Caco-2 (cell line): ENCODE measurements at regions of chr1 and their contacts with region 1.

Region 1: GRCh38 chr1:5620990-5621389 is 371.2 kb downstream of the NPHP4 start:
- DNase-seq: peak in 1 of 2 experiments; percentile 56
- H3K4me3 ChIP-seq: no peak overlapping the region
- H3K4me3 Mint-ChIP-seq: no peak overlapping the region
- H3K27ac Mint-ChIP-seq: no peak overlapping the region
- H3K4me1 ChIP-seq: no peaks in the 10 kb centered on the region
- H3K4me1 Mint-ChIP-seq: no peaks in the 10 kb centered on the region
- H3K27me3 ChIP-seq: no peaks in the 10 kb centered on the region
- H3K27me3 Mint-ChIP-seq: peaks cover 19% of the 10 kb centered on the region
- CTCF ChIP-seq: peak; percentile 57 to 72

Region 2: GRCh38 chr1:5514519-5515183 is 106.3 kb before region 1 on chr1:
- CTCF ChIA-PET with region 1: interaction called, 3 read pairs
- POLR2A ChIA-PET with region 1: no interaction called
- intact Hi-C with region 1: loop called (anchors 1 kb)
- DNase-seq: peak in 1 of 2 experiments; percentile 79
- H3K4me3 ChIP-seq: no peak overlapping the region
- H3K4me3 Mint-ChIP-seq: no peak overlapping the region
- H3K27ac Mint-ChIP-seq: no peak overlapping the region
- H3K4me1 ChIP-seq: no peaks in the 10 kb centered on the region
- H3K4me1 Mint-ChIP-seq: no peaks in the 10 kb centered on the region
- H3K27me3 ChIP-seq: no peaks in the 10 kb centered on the region; the same call in 1 of the 2 replicates
- H3K27me3 Mint-ChIP-seq: peaks cover 5% of the 10 kb centered on the region
- CTCF ChIP-seq: peak; percentile 89 to 96

Region 3: GRCh38 chr1:5597991-5598823 is 22.8 kb before region 1 on chr1:
- CTCF ChIA-PET with region 1: no interaction called
- POLR2A ChIA-PET with region 1: no interaction called
- intact Hi-C with region 1: loop called (anchors 1 kb)
- DNase-seq: peak in 1 of 2 experiments; percentile 11
- H3K4me3 ChIP-seq: no peak overlapping the region
- H3K4me3 Mint-ChIP-seq: no peak overlapping the region
- H3K27ac Mint-ChIP-seq: no peak overlapping the region
- H3K4me1 ChIP-seq: peaks cover 5% of the 10 kb centered on the region; the same call in 1 of the 2 replicates
- H3K4me1 Mint-ChIP-seq: peaks cover 6% of the 10 kb centered on the region
- H3K27me3 ChIP-seq: no peaks in the 10 kb centered on the region
- H3K27me3 Mint-ChIP-seq: peaks cover 7% of the 10 kb centered on the region
- CTCF ChIP-seq: no peak